Prostate gland (tissue), 2 donors: ENCODE measurements at regions of chr2 and their contacts with region 1.

Region 1: DNA sequence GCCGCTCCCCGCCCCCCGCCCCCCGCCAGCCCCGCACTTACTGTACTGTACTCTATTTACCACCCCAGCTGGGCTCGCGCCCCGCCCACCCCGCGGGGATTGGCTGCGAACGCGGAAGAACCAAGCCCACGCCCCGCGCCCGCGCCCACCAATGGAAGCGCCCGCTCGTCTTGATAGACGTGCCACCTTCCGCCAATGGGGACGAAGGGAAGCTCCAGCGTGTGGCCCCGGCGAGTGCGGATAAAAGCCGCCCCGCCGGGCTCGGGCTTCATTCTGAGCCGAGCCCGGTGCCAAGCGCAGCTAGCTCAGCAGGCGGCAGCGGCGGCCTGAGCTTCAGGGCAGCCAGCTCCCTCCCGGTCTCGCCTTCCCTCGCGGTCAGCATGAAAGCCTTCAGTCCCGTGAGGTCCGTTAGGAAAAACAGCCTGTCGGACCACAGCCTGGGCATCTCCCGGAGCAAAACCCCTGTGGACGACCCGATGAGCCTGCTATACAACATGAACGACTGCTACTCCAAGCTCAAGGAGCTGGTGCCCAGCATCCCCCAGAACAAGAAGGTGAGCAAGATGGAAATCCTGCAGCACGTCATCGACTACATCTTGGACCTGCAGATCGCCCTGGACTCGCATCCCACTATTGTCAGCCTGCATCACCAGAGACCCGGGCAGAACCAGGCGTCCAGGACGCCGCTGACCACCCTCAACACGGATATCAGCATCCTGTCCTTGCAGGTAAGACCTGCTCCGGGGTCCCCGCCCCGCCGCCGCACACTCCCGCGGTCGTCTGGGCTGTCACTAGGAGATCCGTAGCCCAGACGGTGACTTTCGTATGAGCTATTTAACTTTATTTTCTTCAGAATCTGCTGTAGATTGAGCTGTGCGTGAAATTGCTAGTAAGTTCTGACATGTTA is at the start of gene ID2:
- DNase-seq: peak; percentile 100
- H3K4me3 ChIP-seq: peak within 1 kb of the TSS; percentile 62 to 64
- H3K27ac ChIP-seq: peak within 1 kb of the TSS; percentile 97 to 98
- H3K4me1 ChIP-seq: peaks cover 5% of the 10 kb centered on the region
- H3K27me3 ChIP-seq: no peaks in the 10 kb centered on the region
- CTCF ChIP-seq: peak in 1 of 4 experiments; percentile 35
- POLR2A ChIP-seq: peak; percentile 99
- total RNA-seq, gene ID2: 172 to 238 TPM

Region 2: GRCh38 chr2:7118606-7119503 is 1563.2 kb before region 1 on chr2:
- intact Hi-C with region 1: loop called (anchors 10 kb)
- DNase-seq: no peak
- H3K4me3 ChIP-seq: no peak overlapping the region
- H3K27ac ChIP-seq: no peak overlapping the region
- H3K4me1 ChIP-seq: no peaks in the 10 kb centered on the region
- H3K27me3 ChIP-seq: no peaks in the 10 kb centered on the region
- CTCF ChIP-seq: peak in 3 of 4 experiments; percentile 15 to 32 (median 22)
- POLR2A ChIP-seq: no peak

Region 3: DNA sequence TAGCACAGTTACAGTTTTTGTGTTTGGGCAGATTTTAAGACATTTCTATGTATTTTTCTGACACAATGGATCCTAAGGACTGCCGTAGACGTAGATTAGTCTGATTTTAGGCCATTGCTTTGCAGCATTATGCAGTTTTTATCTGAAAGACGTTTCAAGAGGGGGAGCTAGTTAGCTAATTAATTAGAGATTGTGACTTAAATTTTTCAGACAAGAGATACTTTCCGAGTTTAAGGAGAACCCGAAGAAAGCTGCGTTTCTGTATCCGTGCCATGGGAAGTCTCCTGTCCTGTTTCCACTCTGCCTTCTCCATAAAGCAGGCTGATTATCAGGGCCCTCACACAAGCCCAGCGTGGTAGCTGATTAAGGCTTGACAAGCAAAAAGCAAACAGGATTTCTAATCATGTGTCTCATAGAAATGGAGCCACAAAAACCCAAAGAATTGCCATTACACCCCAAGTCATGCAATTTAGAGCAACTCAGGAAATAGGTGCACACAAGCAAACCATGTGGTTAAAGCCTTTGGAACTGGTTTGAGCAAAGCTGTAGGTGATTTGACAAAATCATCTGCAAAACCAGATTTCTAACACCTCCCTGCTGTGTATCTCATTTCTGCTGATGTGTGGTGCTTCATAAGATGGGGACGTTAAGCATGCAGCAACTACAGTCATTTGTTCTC is 956.7 kb before region 1 on chr2:
- intact Hi-C with region 1: loop called (anchors 2 kb)
- DNase-seq: no peak
- H3K4me3 ChIP-seq: no peak overlapping the region
- H3K27ac ChIP-seq: no peak overlapping the region
- H3K4me1 ChIP-seq: no peaks in the 10 kb centered on the region
- H3K27me3 ChIP-seq: no peaks in the 10 kb centered on the region
- CTCF ChIP-seq: peak in 1 of 4 experiments; percentile 26
- POLR2A ChIP-seq: no peak

Region 4: DNA sequence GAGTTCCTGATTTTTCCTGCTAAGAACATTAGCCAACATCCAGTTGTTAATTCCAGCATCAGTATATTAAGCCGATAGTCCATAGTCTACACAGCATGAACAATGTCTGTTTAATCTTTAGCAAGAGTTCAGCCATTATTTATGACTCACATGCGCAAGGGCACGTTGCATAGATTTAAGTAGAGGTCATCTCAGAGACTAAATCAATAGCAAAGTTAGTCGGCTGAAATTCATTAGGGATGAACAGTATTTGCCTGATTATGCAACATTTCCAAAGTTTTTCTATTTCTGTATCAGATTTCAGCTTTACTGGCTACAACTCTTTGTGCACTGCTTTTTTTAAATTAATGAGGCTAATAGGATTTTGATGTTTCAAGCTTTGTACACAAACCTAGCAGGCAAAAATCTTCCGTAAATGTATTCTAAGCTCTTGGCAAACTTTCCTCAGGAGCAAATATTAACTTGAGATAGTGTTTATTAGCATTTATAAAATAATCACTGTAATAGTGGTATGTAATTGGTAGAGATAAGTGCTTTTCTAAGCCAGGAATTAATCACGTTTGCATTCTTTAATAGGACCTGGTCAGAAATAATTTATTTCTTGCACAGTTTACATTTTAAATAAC is 578.8 kb before region 1 on chr2:
- intact Hi-C with region 1: loop called (anchors 10 kb)
- DNase-seq: no peak
- H3K4me3 ChIP-seq: no peak overlapping the region
- H3K27ac ChIP-seq: no peak overlapping the region
- H3K4me1 ChIP-seq: no peaks in the 10 kb centered on the region
- H3K27me3 ChIP-seq: peaks cover 5% of the 10 kb centered on the region
- CTCF ChIP-seq: no peak
- POLR2A ChIP-seq: no peak

Region 5: DNA sequence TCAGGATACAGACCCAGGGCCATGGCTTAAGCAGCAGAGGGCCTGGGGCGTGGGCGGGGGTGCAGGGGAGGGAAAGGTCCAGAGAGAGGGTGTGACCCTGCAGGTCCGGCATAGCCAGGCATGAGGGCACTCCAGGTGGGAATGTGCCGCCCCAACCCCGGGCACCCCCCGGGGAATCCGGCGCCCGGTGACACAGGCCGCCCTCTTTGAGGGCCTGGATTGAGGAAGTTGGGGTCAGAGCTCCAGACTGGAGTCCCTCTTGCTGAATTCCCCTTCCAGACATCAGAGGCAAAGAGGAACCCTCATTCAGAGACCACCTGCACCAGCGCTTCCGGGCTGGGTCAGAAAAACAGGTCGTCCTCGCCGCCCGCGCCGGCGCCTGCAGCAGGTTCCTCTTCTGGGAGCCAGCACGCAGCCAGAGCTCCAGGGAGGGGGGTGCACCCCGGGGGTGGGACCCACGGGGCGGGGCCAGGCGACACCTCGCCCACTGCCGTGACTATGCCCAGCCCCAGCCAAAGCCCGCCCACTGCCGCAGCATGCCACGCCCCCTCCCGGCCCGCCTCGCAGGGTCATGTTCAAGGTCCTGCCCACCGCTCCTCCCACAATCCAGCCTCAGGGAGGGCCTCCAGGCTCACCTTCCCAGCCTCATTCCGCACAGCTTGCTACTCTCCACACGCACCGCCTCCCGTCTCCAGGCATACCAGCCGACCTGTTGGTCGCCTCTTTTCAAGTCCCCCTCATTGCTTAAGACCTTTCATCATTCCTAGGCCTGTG is 98.5 kb before region 1 on chr2:
- intact Hi-C with region 1: loop called (anchors 2 kb)
- DNase-seq: peak; percentile 97
- H3K4me3 ChIP-seq: peak overlapping the region in 1 of 2 donors; percentile 15
- H3K27ac ChIP-seq: peak overlapping the region; percentile 60 to 69
- H3K4me1 ChIP-seq: peaks cover 5% of the 10 kb centered on the region
- H3K27me3 ChIP-seq: no peaks in the 10 kb centered on the region
- CTCF ChIP-seq: peak in 2 of 4 experiments; percentile 27 to 33
- POLR2A ChIP-seq: peak; percentile 74

Region 6: DNA sequence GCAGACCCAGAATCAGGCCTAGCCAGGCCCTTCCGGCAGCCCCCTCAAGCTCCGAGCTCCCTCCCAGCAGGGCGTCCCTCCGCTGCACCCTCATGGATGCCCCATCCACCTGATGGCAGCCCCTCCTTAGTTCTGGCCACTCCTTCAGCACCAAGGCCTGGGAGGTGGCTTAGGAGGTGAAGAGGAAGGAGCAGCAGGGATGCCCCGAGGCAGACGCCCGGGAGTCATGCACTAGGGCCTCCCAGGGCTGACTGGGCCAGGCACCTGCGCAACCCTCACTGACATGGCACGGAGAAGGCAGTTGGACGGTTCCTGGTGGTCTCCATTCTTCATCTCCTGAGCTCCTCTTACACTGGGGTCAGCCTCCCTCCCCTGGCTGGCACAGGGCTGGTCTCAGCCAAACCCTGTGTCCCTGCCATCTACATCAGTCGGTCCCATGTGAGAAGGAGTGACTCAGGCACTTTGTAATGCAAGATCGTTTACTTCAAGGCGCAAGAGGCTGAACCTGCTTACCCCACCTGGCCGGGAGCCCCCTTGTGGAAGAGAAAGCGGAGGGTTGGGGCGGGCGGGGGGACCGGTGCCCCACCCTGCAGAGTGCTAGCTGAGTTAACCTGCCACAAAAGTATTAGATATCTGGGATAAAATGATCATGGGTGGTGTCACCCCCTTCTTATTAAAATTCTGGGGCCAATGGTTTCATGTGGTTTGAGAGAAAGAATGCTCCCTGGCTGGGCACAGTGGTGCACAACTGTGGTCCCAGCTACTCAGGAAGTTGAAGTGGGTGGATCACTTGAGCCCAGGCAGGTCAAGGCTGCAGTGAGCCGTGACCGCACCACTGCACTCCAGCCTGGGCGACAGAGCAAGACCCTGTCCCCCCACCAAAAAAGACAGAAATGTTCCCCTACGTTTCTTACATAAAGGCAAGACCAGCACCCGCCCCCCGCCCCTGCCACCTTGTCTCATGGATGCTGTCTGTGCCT is 53.5 kb before region 1 on chr2:
- intact Hi-C with region 1: no loop called
- DNase-seq: no peak
- H3K4me3 ChIP-seq: no peak overlapping the region
- H3K27ac ChIP-seq: no peak overlapping the region
- H3K4me1 ChIP-seq: no peaks in the 10 kb centered on the region
- H3K27me3 ChIP-seq: no peaks in the 10 kb centered on the region
- CTCF ChIP-seq: no peak
- POLR2A ChIP-seq: no peak